Calu3 (cell line): ENCODE measurements at regions of chr4 and their contacts with region 1.

Region 1: GRCh38 chr4:45741897-45742296 is 382.0 kb downstream of the GABRG1 start:
- DNase-seq: no peak
- H3K4me3 Mint-ChIP-seq: no peak overlapping the region
- H3K27ac Mint-ChIP-seq: no peak overlapping the region
- H3K4me1 Mint-ChIP-seq: no peaks in the 10 kb centered on the region
- H3K27me3 Mint-ChIP-seq: no peaks in the 10 kb centered on the region
- CTCF ChIP-seq: no peak

Region 2: GRCh38 chr4:45453258-45453853 is 288.5 kb before region 1 on chr4:
- CTCF ChIA-PET with region 1: interaction called, 4 read pairs
- intact Hi-C with region 1: loop called (anchors 10 kb)
- DNase-seq: peak; percentile 7
- H3K4me3 Mint-ChIP-seq: no peak overlapping the region
- H3K27ac Mint-ChIP-seq: no peak overlapping the region
- H3K4me1 Mint-ChIP-seq: no peaks in the 10 kb centered on the region
- H3K27me3 Mint-ChIP-seq: no peaks in the 10 kb centered on the region
- CTCF ChIP-seq: peak; percentile 34

Region 3: DNA sequence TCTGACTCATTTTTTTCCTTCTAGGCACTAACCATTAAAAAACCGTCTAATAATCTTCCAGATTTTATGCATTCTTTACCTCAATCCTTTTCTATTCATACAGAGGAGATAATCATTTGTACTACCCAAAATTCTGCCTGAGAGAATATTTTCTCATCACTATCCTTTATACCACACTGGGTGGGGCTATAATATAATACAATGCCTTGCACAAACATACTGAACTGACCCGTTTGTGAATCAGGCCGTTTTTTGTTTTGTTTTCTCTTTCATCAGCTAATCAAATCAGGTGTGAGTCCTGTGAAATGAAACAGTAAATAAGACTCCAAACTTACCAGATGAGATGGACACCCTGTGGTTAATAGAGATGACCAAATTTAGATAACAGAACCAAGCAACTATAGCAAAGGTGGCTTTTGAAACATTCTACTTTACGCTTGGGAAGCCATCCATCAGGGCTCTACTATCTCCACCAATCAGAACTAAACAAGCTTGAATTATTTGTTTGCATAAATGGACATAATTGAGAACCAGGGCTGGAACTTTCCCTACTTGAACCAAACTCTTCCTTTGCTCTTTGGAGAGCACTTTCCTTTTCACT is 191.0 kb before region 1 on chr4:
- CTCF ChIA-PET with region 1: no interaction called
- intact Hi-C with region 1: loop called (anchors 5 kb)
- DNase-seq: no peak
- H3K4me3 Mint-ChIP-seq: no peak overlapping the region
- H3K27ac Mint-ChIP-seq: no peak overlapping the region
- H3K4me1 Mint-ChIP-seq: no peaks in the 10 kb centered on the region
- H3K27me3 Mint-ChIP-seq: no peaks in the 10 kb centered on the region
- CTCF ChIP-seq: no peak